H1 (cell line): ENCODE measurements at regions of chr9 and their contacts with region 1.

Region 1: GRCh38 chr9:17810728-17811571 is 232.1 kb downstream of the SH3GL2 start:
- DNase-seq: no peak
- H3K4me3 ChIP-seq: peak overlapping the region in 1 of 4 experiments; percentile 44; a peak in 1 of 8 replicates
- H3K27ac ChIP-seq: no peak overlapping the region
- H3K4me1 ChIP-seq: peaks cover 0 to 3% (median under 1%) of the 10 kb centered on the region in 4 experiments; a peak in 1 of 7 replicates
- H3K27me3 ChIP-seq: no peaks in the 10 kb centered on the region
- CTCF ChIP-seq: peak in 2 of 3 experiments; percentile 63 to 79; a peak in 3 of 4 replicates
- EP300 ChIP-seq: no peak
- POLR2A ChIP-seq: no peak
- RAD21 ChIP-seq: peak; percentile 87 to 92

Region 2: DNA sequence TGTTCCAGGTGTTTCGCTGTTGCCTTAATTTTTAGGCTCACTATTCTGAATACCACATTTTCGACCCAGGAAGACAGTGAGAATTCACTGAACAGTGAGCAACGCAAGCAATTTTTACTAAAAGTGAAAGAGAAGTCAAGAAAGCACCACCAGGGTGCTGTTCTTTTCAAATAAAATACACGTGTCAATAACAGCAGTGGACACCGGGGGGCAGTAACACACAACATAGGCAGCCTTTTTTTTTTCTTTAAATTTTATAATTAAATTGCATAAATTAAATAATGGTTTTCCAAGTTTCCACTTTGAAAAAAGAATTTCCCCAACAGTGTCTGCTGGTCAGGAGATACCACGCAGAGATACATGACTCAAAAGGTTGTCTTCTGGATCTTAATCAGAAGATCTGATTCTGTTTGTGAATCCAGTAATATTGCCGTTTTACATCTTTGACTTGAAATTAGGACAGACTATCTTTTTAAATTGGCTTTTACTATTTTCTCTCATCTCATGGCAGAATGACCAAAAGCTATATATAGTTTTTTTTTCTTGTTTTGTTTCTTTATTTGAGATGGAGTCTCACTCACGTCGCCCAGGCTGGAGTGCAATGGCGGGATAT is 279.2 kb before region 1 on chr9:
- CTCF ChIA-PET with region 1: interaction called, 95 read pairs
- POLR2A ChIA-PET with region 1: no interaction called
- DNase-seq: peak in 1 of 2 experiments; percentile 73
- H3K4me3 ChIP-seq: no peak overlapping the region
- H3K27ac ChIP-seq: no peak overlapping the region
- H3K4me1 ChIP-seq: no peaks in the 10 kb centered on the region; a peak in 1 of 7 replicates
- H3K27me3 ChIP-seq: no peaks in the 10 kb centered on the region
- CTCF ChIP-seq: peak in 2 of 3 experiments; percentile 53 to 92; a peak in 3 of 4 replicates
- EP300 ChIP-seq: no peak
- POLR2A ChIP-seq: no peak
- RAD21 ChIP-seq: peak; percentile 80 to 83

Region 3: GRCh38 chr9:17682684-17683083 is 128.3 kb before region 1 on chr9:
- CTCF ChIA-PET with region 1: no interaction called
- POLR2A ChIA-PET with region 1: no interaction called
- DNase-seq: no peak
- H3K4me3 ChIP-seq: no peak overlapping the region
- H3K27ac ChIP-seq: no peak overlapping the region
- H3K4me1 ChIP-seq: peaks cover 0 to 3% (median 0%) of the 10 kb centered on the region in 4 experiments; a peak in 1 of 7 replicates
- H3K27me3 ChIP-seq: no peaks in the 10 kb centered on the region
- CTCF ChIP-seq: no peak
- EP300 ChIP-seq: no peak
- POLR2A ChIP-seq: no peak
- RAD21 ChIP-seq: no peak

Region 4: GRCh38 chr9:17719053-17719452 is 91.9 kb before region 1 on chr9:
- CTCF ChIA-PET with region 1: no interaction called
- POLR2A ChIA-PET with region 1: no interaction called
- DNase-seq: no peak
- H3K4me3 ChIP-seq: no peak overlapping the region
- H3K27ac ChIP-seq: no peak overlapping the region
- H3K4me1 ChIP-seq: no peaks in the 10 kb centered on the region
- H3K27me3 ChIP-seq: no peaks in the 10 kb centered on the region
- CTCF ChIP-seq: no peak
- EP300 ChIP-seq: no peak
- POLR2A ChIP-seq: no peak
- RAD21 ChIP-seq: no peak

Region 5: DNA sequence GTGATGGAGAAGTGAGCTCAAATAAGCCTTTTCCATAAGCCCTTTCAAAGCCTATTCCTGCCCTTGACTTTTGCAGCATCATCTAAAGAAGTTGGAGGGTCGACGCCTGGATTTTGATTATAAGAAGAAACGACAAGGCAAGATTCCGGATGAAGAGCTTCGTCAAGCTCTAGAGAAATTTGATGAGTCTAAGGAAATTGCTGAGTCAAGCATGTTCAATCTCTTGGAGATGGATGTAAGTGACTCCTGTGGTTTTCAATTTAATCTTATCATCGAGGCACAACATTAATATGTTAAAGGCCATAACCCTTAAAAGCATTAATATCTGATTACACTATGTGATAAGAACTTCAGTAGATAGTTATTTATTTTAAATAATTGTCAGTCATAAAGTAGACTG is 21.6 kb before region 1 on chr9:
- CTCF ChIA-PET with region 1: no interaction called
- POLR2A ChIA-PET with region 1: no interaction called
- DNase-seq: no peak
- H3K4me3 ChIP-seq: no peak overlapping the region
- H3K27ac ChIP-seq: no peak overlapping the region
- H3K4me1 ChIP-seq: no peaks in the 10 kb centered on the region
- H3K27me3 ChIP-seq: no peaks in the 10 kb centered on the region
- CTCF ChIP-seq: no peak
- EP300 ChIP-seq: no peak
- POLR2A ChIP-seq: no peak
- RAD21 ChIP-seq: no peak

Region 6: DNA sequence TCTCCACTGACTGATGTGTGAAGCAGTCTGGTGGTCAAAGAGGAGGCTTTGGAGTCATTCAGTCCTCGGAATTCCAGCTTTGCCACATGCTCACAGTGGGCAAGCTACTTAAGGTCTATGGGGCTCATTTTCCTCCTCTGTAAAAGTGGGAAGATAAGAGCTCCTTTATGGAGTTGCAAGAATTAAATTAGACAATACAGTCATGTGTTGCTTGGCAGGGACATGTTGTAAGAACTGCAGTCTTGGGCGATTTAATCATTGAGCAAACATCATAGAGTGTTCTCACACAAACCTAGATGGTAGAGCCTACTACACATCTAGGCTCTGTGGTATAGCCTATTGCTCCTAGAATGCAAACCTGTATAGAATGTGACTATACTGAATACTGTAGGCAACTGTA is 21.9 kb after region 1 on chr9:
- CTCF ChIA-PET with region 1: interaction called, 24 read pairs
- POLR2A ChIA-PET with region 1: no interaction called
- DNase-seq: no peak
- H3K4me3 ChIP-seq: no peak overlapping the region
- H3K27ac ChIP-seq: no peak overlapping the region
- H3K4me1 ChIP-seq: peaks cover 0 to 7% (median 2%) of the 10 kb centered on the region in 4 experiments; a peak in 4 of 7 replicates
- H3K27me3 ChIP-seq: no peaks in the 10 kb centered on the region
- CTCF ChIP-seq: no peak
- EP300 ChIP-seq: no peak
- POLR2A ChIP-seq: no peak
- RAD21 ChIP-seq: no peak

Region 7: GRCh38 chr9:18017136-18017535 is 206.2 kb after region 1 on chr9:
- CTCF ChIA-PET with region 1: interaction called, 13 read pairs
- POLR2A ChIA-PET with region 1: no interaction called
- DNase-seq: no peak
- H3K4me3 ChIP-seq: no peak overlapping the region
- H3K27ac ChIP-seq: no peak overlapping the region
- H3K4me1 ChIP-seq: no peaks in the 10 kb centered on the region; a peak in 1 of 7 replicates
- H3K27me3 ChIP-seq: no peaks in the 10 kb centered on the region
- CTCF ChIP-seq: peak in 2 of 3 experiments; percentile 15 to 29; a peak in 2 of 4 replicates
- EP300 ChIP-seq: no peak
- POLR2A ChIP-seq: no peak
- RAD21 ChIP-seq: peak; percentile 28 to 45

Region 8: GRCh38 chr9:18143028-18143745 is 332.2 kb after region 1 on chr9:
- CTCF ChIA-PET with region 1: interaction called, 22 read pairs
- POLR2A ChIA-PET with region 1: no interaction called
- DNase-seq: no peak
- H3K4me3 ChIP-seq: no peak overlapping the region
- H3K27ac ChIP-seq: no peak overlapping the region
- H3K4me1 ChIP-seq: no peaks in the 10 kb centered on the region
- H3K27me3 ChIP-seq: no peaks in the 10 kb centered on the region
- CTCF ChIP-seq: peak in 2 of 3 experiments; percentile 39 to 45; a peak in 3 of 4 replicates
- EP300 ChIP-seq: no peak
- POLR2A ChIP-seq: no peak
- RAD21 ChIP-seq: peak; percentile 30 to 40; a peak in 3 of 4 replicates

Region 9: GRCh38 chr9:18208154-18209059 is 397.5 kb after region 1 on chr9:
- CTCF ChIA-PET with region 1: interaction called, 217 read pairs
- POLR2A ChIA-PET with region 1: no interaction called
- DNase-seq: peak; percentile 46 to 67
- H3K4me3 ChIP-seq: no peak overlapping the region
- H3K27ac ChIP-seq: no peak overlapping the region
- H3K4me1 ChIP-seq: peaks cover 0 to 4% (median 0%) of the 10 kb centered on the region in 4 experiments; a peak in 1 of 7 replicates
- H3K27me3 ChIP-seq: no peaks in the 10 kb centered on the region
- CTCF ChIP-seq: peak; percentile 47 to 79 (median 76)
- EP300 ChIP-seq: no peak
- POLR2A ChIP-seq: no peak
- RAD21 ChIP-seq: peak; percentile 79 to 83